Posterior vena cava (tissue), 2 donors: ENCODE measurements at regions of chr2 and their contacts with region 1.

Region 1: GRCh38 chr2:58163913-58164312 is 77.2 kb downstream of the FANCL start:
- DNase-seq: no peak

Region 2: DNA sequence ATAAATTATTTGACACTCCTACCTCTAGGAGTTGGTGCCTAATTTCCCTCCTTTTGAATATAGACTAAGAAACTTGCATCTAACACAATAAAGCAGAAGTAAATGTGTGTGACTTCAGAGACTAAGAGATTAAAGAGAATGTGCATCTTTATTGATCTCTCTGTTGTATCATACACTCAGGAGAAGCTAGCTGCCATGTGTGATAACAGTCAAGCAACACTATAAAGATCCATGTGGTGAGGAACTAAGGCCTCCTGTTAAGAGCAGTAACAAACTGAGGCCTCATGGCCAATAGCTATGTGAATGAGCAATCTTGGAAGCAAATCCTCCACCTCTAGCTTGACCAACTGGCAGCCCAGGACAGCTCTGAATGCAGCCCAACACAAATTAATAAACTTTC is 73.8 kb after region 1 on chr2:
- intact Hi-C with region 1: loop called in 1 of 2 experiments (anchors 2 kb)
- DNase-seq: no peak